HCT116 (cell line): ENCODE measurements at regions of chr2 and their contacts with region 1.

Region 1: DNA sequence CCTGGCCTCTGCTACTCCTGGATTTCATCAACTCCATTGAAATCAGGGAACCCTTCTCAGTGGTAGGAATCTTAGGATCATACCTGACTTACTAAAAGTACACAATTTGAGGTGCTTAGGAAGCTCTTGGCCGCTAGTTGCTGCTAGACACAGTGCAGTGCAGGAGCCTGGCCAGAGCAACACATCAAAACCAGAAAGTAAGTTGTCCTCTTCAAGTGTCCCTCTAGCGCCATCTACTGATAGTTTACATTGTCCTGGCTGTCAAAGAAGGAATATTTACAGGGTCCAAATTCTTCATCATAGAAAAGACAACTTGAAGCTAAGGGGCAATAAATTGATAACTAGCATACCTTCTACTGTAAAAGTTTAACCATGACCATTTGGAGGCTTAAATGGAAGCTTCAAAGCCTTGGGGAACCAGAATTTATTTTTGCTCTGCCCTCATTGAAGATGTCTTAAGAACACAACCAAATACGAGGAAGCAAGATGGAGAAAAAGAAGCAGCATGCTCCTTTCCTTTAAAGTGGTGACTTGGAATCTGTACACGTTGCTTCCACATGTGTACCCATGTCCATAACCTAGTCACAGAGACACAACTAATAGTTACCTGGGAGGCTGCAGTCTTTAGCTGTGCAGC is 889.1 kb upstream of the GCFC2 start:
- DNase-seq: peak; percentile 12
- ATAC-seq: peak; percentile 61; the same call in 1 of the 2 replicates
- H3K4me3 ChIP-seq: no peak overlapping the region
- H3K27ac ChIP-seq: no peak overlapping the region
- H3K4me1 ChIP-seq: no peaks in the 10 kb centered on the region
- H3K27me3 ChIP-seq: no peaks in the 10 kb centered on the region
- CTCF ChIP-seq: peak; percentile 22 to 62 (median 46); a peak in 5 of 6 replicates
- POLR2A ChIP-seq: no peak
- RAD21 ChIP-seq: peak; percentile 34; the same call in 1 of the 2 replicates

Region 2: DNA sequence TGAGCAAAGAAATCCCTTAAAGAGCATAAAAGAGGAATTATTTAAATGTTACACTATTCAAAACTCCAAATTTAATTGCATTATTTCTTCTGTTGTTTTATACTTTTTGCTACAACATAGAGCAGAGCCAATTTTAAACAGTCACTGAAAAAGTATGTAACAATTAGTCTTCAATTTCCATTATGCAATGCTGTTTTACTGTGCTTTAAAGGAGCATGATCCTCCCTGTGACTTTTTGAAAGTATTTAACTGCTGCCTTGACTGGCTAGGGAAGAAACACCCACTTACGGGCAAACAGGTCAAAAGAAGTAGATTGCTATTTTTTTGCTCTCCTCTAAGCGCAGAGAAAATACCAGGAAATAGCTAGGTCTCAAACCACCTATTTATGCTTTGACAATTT is 671.8 kb before region 1 on chr2:
- CTCF ChIA-PET with region 1: no interaction called
- POLR2A ChIA-PET with region 1: no interaction called
- RAD21 ChIA-PET with region 1: no interaction called
- intact Hi-C with region 1: no loop called
- DNase-seq: no peak
- ATAC-seq: no peak
- H3K4me3 ChIP-seq: no peak overlapping the region
- H3K27ac ChIP-seq: no peak overlapping the region
- H3K4me1 ChIP-seq: no peaks in the 10 kb centered on the region
- H3K27me3 ChIP-seq: no peaks in the 10 kb centered on the region
- CTCF ChIP-seq: no peak
- POLR2A ChIP-seq: no peak
- RAD21 ChIP-seq: no peak

Region 3: GRCh38 chr2:76197842-76198448 is 401.9 kb before region 1 on chr2:
- CTCF ChIA-PET with region 1: no interaction called
- POLR2A ChIA-PET with region 1: no interaction called
- RAD21 ChIA-PET with region 1: no interaction called
- intact Hi-C with region 1: loop called (anchors 10 kb)
- DNase-seq: peak; percentile 19
- ATAC-seq: no peak
- H3K4me3 ChIP-seq: no peak overlapping the region
- H3K27ac ChIP-seq: no peak overlapping the region
- H3K4me1 ChIP-seq: no peaks in the 10 kb centered on the region
- H3K27me3 ChIP-seq: no peaks in the 10 kb centered on the region
- CTCF ChIP-seq: peak in 2 of 3 experiments; percentile 52 to 70; a peak in 4 of 6 replicates
- POLR2A ChIP-seq: no peak
- RAD21 ChIP-seq: peak; percentile 16; the same call in 1 of the 2 replicates

Region 4: DNA sequence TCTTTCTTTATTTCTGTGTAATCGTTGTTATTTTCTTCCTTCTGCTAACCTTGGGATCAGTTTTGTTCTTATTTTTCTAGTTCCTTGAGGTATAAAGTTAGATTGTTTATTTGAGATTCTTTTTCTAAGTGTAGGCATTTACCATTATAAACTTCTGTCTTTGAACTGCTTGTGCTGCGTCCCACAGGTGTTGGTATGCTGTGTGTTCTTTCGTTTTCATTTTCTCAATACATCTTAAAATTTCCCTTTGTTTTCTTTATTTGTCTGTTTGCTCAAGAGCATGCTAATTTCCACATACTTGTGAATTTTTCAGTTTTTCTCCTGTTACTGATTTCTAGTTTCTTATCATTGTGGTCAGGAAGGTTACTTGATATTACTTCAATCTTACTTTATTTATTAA is 15.4 kb before region 1 on chr2:
- CTCF ChIA-PET with region 1: no interaction called
- POLR2A ChIA-PET with region 1: no interaction called
- RAD21 ChIA-PET with region 1: no interaction called
- intact Hi-C with region 1: no loop called
- DNase-seq: no peak
- ATAC-seq: no peak
- H3K4me3 ChIP-seq: no peak overlapping the region
- H3K27ac ChIP-seq: no peak overlapping the region
- H3K4me1 ChIP-seq: no peaks in the 10 kb centered on the region
- H3K27me3 ChIP-seq: no peaks in the 10 kb centered on the region
- CTCF ChIP-seq: no peak
- POLR2A ChIP-seq: no peak
- RAD21 ChIP-seq: no peak

Region 5: GRCh38 chr2:77064324-77064723 is 464.5 kb after region 1 on chr2:
- CTCF ChIA-PET with region 1: no interaction called
- POLR2A ChIA-PET with region 1: no interaction called
- RAD21 ChIA-PET with region 1: no interaction called
- intact Hi-C with region 1: no loop called
- DNase-seq: no peak
- ATAC-seq: no peak
- H3K4me3 ChIP-seq: no peak overlapping the region
- H3K27ac ChIP-seq: no peak overlapping the region
- H3K4me1 ChIP-seq: no peaks in the 10 kb centered on the region
- H3K27me3 ChIP-seq: no peaks in the 10 kb centered on the region
- CTCF ChIP-seq: no peak
- POLR2A ChIP-seq: no peak
- RAD21 ChIP-seq: no peak